ENCODE measurements at regions of chr16 and their contacts with region 1.

Region 1: DNA sequence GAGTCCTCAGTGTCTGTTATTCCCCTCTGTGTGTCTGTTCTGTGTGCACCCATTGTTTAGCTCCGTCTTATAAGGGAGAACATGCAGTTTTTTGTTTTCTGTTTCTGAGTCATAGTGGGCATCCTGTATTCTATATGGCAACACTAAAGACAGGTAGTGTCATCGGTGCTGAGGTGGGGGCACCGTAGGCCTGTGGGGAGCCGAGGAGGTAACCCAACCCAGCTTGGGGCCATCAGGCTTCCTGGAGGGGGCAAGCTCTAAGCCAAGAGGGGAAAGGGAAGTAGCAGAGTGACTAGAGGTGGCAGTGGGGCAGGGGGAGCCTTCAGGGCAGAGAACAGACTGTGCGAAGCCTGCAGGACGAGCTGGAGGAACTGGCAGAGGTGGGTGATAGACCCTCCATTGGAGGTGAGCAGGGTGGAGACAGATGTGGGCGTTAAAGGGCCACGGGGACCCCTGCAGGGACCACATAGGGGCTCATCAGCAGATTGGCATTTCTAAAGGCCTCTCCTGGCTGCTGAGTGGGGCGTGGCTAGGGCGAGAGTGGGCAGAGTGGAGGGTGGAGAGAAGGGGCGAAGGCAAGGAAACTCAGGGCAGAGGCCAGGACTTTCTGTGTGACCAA is 36.5 kb downstream of the CPNE2 start:
- DNase-seq: peak in 8 of 9 experiments; percentile 53 to 88 (median 70)
- ATAC-seq: peak; percentile 89
- H3K4me3 ChIP-seq: peak overlapping the region; percentile 42 to 44
- H3K4me3 Mint-ChIP-seq: peak overlapping the region; percentile 83
- H3K27ac ChIP-seq: peak overlapping the region; percentile 45 to 71
- H3K27ac Mint-ChIP-seq: peak overlapping the region; percentile 97
- H3K4me1 ChIP-seq: peaks cover 92% of the 10 kb centered on the region
- H3K4me1 Mint-ChIP-seq: peaks cover 92% of the 10 kb centered on the region
- H3K27me3 ChIP-seq: no peaks in the 10 kb centered on the region
- H3K27me3 Mint-ChIP-seq: no peaks in the 10 kb centered on the region
- CTCF ChIP-seq: no peak

Region 2: GRCh38 chr16:55773859-55774549 is 1354.9 kb before region 1 on chr16:
- CTCF ChIA-PET with region 1: no interaction called
- POLR2A ChIA-PET with region 1: no interaction called
- intact Hi-C with region 1: no loop called
- DNase-seq: no peak
- ATAC-seq: no peak
- H3K4me3 ChIP-seq: no peak overlapping the region
- H3K4me3 Mint-ChIP-seq: no peak overlapping the region
- H3K27ac ChIP-seq: no peak overlapping the region
- H3K27ac Mint-ChIP-seq: no peak overlapping the region
- H3K4me1 ChIP-seq: no peaks in the 10 kb centered on the region
- H3K4me1 Mint-ChIP-seq: no peaks in the 10 kb centered on the region
- H3K27me3 ChIP-seq: no peaks in the 10 kb centered on the region
- H3K27me3 Mint-ChIP-seq: peaks cover 7% of the 10 kb centered on the region
- CTCF ChIP-seq: no peak

Region 3: DNA sequence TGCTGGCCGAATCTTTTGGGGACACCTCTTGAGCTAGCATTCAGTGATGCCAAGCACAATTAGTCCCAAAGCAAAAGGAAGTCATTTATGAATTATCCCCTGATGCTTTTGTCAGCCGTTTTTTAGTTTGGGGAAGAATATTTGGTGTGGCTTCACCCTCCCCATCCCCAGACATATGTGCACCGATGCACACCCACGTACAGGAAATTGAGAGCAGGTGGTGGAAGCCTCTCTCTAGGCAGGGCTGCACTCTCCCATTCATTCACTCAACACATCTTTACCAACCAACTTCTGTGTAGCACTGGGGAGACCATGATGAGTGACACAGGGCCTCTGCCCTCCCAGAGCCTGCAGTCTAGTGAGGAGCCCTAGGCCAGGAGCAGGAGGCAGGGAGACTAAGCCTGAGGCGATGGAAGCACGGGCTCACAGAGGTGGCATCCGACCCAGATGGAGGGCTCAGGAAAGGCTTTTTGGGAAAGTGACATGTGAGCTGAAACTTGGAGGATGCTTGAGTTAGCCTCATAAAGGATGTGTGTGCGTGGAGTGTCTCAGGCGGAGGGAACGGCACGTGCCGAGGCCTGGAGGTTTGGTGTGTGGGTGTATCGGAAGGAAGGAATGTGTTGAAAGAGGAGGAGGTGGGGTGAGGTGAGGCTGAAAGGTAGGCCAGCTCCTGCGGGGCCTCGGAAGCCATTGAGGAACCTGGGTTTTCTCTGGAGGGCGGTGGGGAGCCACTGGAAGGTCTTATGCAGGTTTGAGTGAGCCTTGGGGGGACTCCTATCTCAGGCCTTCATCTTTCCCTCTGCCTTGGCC is 13.1 kb after region 1 on chr16:
- CTCF ChIA-PET with region 1: no interaction called
- POLR2A ChIA-PET with region 1: interaction called, 26 read pairs
- intact Hi-C with region 1: loop called (anchors 2 kb)
- DNase-seq: peak in 5 of 9 experiments; percentile 29 to 58 (median 38)
- ATAC-seq: peak; percentile 91
- H3K4me3 ChIP-seq: peak overlapping the region in 1 of 2 experiments; percentile 3
- H3K4me3 Mint-ChIP-seq: peak overlapping the region; percentile 75
- H3K27ac ChIP-seq: peak overlapping the region; percentile 19 to 42
- H3K27ac Mint-ChIP-seq: peak overlapping the region; percentile 98
- H3K4me1 ChIP-seq: peaks cover 56% of the 10 kb centered on the region
- H3K4me1 Mint-ChIP-seq: peaks cover 68% of the 10 kb centered on the region
- H3K27me3 ChIP-seq: no peaks in the 10 kb centered on the region
- H3K27me3 Mint-ChIP-seq: no peaks in the 10 kb centered on the region
- CTCF ChIP-seq: no peak

Region 4: GRCh38 chr16:57147381-57148221 is 18.7 kb after region 1 on chr16:
- CTCF ChIA-PET with region 1: interaction called, 4 read pairs
- POLR2A ChIA-PET with region 1: interaction called, 26 read pairs
- intact Hi-C with region 1: loop called (anchors 2 kb)
- DNase-seq: no peak
- ATAC-seq: no peak
- H3K4me3 ChIP-seq: no peak overlapping the region
- H3K4me3 Mint-ChIP-seq: no peak overlapping the region
- H3K27ac ChIP-seq: no peak overlapping the region
- H3K27ac Mint-ChIP-seq: peak overlapping the region; percentile 64
- H3K4me1 ChIP-seq: peaks cover 34% of the 10 kb centered on the region
- H3K4me1 Mint-ChIP-seq: peaks cover 32% of the 10 kb centered on the region
- H3K27me3 ChIP-seq: no peaks in the 10 kb centered on the region
- H3K27me3 Mint-ChIP-seq: no peaks in the 10 kb centered on the region
- CTCF ChIP-seq: no peak

Region 5: GRCh38 chr16:57167953-57168352 is 39.1 kb after region 1 on chr16:
- CTCF ChIA-PET with region 1: interaction called, 6 read pairs
- POLR2A ChIA-PET with region 1: interaction called, 3 read pairs
- intact Hi-C with region 1: loop called in 1 of 2 experiments (anchors 5 kb)
- DNase-seq: peak in 3 of 9 experiments; percentile 21 to 85 (median 76)
- ATAC-seq: peak; percentile 99
- H3K4me3 ChIP-seq: no peak overlapping the region
- H3K4me3 Mint-ChIP-seq: no peak overlapping the region
- H3K27ac ChIP-seq: no peak overlapping the region
- H3K27ac Mint-ChIP-seq: no peak overlapping the region
- H3K4me1 ChIP-seq: no peaks in the 10 kb centered on the region
- H3K4me1 Mint-ChIP-seq: peaks cover 9% of the 10 kb centered on the region
- H3K27me3 ChIP-seq: no peaks in the 10 kb centered on the region
- H3K27me3 Mint-ChIP-seq: no peaks in the 10 kb centered on the region
- CTCF ChIP-seq: peak; percentile 70

Measured in CD8-positive, alpha-beta T cell (primary cell).